ENCODE measurements at regions of chr18 and their contacts with region 1.

Region 1: DNA sequence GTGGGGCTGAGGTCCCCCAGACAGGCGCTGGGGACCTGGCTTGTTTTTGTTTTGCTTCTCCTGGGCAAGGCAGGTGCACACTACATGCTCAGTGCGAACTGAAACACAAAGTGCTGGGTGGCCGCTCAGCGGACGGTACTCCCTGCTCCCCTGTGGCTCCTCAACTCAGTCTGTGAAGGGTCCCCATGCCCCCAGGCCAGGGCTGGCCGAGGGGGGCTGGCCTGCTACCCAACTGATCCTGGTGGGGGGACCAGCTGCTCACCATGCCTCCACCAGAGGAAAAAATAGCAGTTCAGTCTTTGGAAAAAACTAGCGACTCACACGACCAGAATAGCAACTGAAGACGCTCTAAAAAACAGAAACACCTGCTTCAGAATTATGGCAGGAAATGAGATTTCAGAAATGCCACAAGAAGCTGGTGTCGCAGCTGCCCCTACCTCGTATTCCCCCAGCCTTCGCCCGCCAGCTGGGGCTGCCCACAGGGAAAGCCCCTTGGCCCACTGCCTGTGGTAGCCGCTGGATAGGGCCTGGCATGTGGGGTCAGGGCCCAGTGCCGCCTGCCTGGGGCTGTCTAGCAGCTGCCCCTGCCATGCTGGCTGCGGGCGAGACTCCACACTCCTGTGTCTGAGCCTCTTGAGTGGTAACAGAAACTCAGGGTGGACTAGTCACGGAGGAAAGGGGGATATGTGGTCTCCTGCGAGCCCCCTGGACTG is 43.7 kb downstream of the MEX3C start:
- DNase-seq: peak; percentile 70
- H3K4me3 Mint-ChIP-seq: peak overlapping the region; percentile 70
- H3K27ac Mint-ChIP-seq: peak overlapping the region; percentile 97
- H3K4me1 Mint-ChIP-seq: peaks cover 47% of the 10 kb centered on the region
- H3K27me3 Mint-ChIP-seq: no peaks in the 10 kb centered on the region

Region 2: DNA sequence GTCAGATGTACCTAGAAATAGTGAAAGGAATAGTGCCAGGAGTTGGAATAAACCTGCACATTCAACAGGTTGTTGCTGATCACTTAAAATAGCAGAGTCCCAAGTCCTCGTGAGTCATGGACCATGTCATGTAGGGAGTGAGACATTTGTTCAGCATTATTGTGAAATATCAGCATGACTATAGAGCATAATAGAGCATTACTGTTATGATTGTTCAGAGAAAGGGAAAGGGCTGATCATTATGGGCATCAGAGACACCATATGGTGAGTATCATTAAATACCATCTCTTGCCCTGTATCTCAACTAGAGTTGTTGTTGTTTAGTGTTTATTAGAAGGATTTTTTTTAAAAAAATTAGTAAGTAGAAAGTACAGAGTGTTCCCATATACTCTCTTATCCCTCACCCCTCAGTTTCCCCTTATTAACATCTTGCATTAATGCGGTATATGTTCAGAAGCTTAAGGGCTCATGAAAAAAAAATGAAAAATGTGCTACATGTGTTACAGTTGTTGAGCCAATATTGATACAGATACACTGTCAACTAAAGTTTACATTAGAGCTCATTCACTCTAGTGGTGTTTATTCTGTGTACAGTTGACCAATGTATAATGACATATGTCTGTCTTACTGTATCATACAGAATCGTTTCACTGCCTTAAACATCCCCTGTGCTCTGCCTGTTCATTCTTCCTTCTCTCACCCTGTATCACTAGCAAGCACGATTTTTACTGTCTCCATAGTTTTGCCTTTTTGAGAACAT is 180.3 kb before region 1 on chr18:
- CTCF ChIA-PET with region 1: no interaction called
- POLR2A ChIA-PET with region 1: no interaction called
- intact Hi-C with region 1: loop called (anchors 5 kb)
- DNase-seq: peak; percentile 23
- H3K4me3 Mint-ChIP-seq: no peak overlapping the region
- H3K27ac Mint-ChIP-seq: peak overlapping the region; percentile 75
- H3K4me1 Mint-ChIP-seq: peaks cover 34% of the 10 kb centered on the region
- H3K27me3 Mint-ChIP-seq: no peaks in the 10 kb centered on the region

Region 3: DNA sequence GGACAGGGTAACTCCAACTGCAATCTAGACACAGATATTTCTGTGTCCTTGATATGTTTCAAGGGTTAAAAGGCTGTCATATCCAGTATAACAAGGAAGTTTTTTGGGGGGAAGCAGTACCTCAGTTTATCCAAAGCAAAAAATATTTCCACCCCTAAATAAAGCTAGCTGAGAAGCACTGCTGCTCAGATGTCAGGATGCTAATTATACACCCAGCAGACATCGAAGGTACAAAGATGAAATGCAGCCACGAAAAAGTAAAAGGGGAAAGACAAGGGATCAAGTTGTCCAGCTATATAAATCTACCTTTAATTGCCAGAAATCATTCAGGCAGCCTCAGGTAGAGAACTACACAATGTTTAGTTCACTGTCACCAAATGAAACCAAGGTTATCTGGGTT is 159.8 kb before region 1 on chr18:
- CTCF ChIA-PET with region 1: no interaction called
- POLR2A ChIA-PET with region 1: no interaction called
- intact Hi-C with region 1: no loop called
- DNase-seq: no peak
- H3K4me3 Mint-ChIP-seq: no peak overlapping the region
- H3K27ac Mint-ChIP-seq: no peak overlapping the region
- H3K4me1 Mint-ChIP-seq: no peaks in the 10 kb centered on the region
- H3K27me3 Mint-ChIP-seq: no peaks in the 10 kb centered on the region

Region 4: DNA sequence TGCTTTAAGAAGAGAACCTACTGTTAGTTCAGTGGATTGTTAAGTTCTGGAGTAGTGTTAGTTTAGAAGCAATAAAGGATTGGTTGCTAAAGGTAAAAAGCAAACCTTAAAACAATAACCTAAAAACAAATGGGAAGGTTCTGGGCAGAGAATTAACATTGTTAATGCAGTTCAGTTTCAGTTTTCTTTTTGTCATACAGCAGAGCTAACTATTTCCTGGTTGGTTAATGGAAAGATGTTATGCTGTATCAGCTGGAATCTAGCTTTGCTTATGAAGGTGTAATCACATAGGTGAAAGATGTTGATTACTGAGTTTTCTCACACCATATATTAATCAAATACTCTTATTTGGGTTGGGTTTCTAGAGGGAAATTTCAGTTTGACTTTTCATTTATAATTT is 100.0 kb before region 1 on chr18:
- CTCF ChIA-PET with region 1: no interaction called
- POLR2A ChIA-PET with region 1: no interaction called
- intact Hi-C with region 1: no loop called
- DNase-seq: no peak
- H3K4me3 Mint-ChIP-seq: no peak overlapping the region
- H3K27ac Mint-ChIP-seq: peak overlapping the region; percentile 77
- H3K4me1 Mint-ChIP-seq: peaks cover 38% of the 10 kb centered on the region
- H3K27me3 Mint-ChIP-seq: no peaks in the 10 kb centered on the region

Region 5: DNA sequence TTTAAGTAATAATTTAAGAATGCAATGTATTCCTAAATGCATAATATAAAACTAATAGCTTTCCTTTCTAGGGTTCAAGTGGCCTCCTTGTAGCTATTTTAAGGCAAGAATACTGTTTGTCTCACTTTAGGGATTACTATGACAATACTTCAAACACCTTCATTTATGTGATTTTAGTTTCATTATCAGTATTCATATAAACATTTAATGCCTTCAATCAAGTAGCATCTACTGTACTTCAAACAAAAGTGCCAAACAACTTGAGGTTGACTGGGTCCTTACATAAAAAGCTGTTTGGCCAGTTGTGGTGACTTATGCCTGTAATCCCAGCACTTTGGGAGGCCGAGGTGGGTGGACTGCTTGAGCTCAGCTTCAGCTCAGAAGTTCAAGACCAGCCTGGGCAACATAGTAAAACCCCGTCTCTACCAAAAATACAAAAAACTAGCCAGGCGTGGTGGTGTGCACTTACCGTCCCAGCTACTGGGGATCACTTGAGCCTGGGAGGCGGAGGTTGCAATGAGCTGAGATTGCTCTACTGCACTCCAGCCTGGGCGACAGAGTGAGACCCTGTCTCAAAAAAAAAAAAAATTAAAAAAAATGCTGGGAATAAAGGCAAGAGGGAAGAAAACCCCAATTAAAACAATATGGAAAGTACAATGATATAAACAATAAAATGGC is 34.3 kb after region 1 on chr18:
- CTCF ChIA-PET with region 1: no interaction called
- POLR2A ChIA-PET with region 1: interaction called, 4 read pairs
- intact Hi-C with region 1: loop called (anchors 1 kb)
- DNase-seq: no peak
- H3K4me3 Mint-ChIP-seq: peak overlapping the region; percentile 35
- H3K27ac Mint-ChIP-seq: peak overlapping the region; percentile 58
- H3K4me1 Mint-ChIP-seq: peaks cover 78% of the 10 kb centered on the region
- H3K27me3 Mint-ChIP-seq: no peaks in the 10 kb centered on the region

Region 6: GRCh38 chr18:51235011-51235789 is 81.4 kb after region 1 on chr18:
- CTCF ChIA-PET with region 1: no interaction called
- POLR2A ChIA-PET with region 1: no interaction called
- intact Hi-C with region 1: loop called (anchors 1 kb)
- DNase-seq: peak; percentile 69
- H3K4me3 Mint-ChIP-seq: no peak overlapping the region
- H3K27ac Mint-ChIP-seq: peak overlapping the region; percentile 47
- H3K4me1 Mint-ChIP-seq: peaks cover 22% of the 10 kb centered on the region
- H3K27me3 Mint-ChIP-seq: peaks cover 8% of the 10 kb centered on the region